ENCODE measurements at regions of chr22 and their contacts with region 1.

Region 1: DNA sequence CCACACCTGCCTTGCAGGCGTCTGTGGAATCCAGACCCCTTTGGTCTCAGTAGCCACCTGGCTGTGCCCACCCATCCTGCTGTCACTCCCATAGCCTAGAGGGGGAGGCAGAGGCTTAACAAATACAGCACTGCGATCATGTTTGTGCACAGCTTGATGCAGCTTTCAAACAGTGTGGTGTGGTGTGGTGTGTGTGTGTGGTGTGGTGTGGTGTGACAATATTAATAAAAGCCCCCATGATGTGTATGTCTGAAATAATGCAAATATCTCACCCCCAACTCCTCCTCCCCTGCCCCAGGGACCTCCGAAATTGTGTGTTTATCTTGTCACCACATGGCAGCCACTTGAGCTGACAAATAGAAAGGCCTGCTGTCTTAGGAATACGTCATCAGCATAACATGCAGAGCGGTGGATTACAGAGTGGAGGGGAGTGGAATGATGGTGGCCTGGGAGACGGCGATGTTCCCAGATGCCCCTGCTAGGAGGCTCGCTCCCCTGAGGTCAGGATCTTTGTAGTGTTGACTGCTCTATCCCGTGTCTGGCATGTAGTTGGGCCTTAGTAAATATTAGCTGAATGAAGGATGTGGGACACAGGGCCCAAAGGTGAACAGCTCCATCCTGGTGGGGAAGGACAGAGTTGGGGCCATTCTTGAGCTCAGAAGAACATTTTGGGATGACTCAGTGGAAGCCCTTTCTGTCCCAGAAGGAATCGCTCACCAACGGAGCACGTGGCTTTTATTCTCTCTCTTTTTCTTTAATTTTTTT is 2.8 kb downstream of the PDXP start:
- DNase-seq: peak; percentile 70
- H3K4me3 ChIP-seq: no peak overlapping the region
- H3K27ac ChIP-seq: peak overlapping the region; percentile 53 to 72
- H3K4me1 ChIP-seq: peaks cover 39% of the 10 kb centered on the region
- H3K27me3 ChIP-seq: no peaks in the 10 kb centered on the region
- CTCF ChIP-seq: peak in 1 of 3 experiments; percentile 18
- POLR2A ChIP-seq: no peak

Region 2: DNA sequence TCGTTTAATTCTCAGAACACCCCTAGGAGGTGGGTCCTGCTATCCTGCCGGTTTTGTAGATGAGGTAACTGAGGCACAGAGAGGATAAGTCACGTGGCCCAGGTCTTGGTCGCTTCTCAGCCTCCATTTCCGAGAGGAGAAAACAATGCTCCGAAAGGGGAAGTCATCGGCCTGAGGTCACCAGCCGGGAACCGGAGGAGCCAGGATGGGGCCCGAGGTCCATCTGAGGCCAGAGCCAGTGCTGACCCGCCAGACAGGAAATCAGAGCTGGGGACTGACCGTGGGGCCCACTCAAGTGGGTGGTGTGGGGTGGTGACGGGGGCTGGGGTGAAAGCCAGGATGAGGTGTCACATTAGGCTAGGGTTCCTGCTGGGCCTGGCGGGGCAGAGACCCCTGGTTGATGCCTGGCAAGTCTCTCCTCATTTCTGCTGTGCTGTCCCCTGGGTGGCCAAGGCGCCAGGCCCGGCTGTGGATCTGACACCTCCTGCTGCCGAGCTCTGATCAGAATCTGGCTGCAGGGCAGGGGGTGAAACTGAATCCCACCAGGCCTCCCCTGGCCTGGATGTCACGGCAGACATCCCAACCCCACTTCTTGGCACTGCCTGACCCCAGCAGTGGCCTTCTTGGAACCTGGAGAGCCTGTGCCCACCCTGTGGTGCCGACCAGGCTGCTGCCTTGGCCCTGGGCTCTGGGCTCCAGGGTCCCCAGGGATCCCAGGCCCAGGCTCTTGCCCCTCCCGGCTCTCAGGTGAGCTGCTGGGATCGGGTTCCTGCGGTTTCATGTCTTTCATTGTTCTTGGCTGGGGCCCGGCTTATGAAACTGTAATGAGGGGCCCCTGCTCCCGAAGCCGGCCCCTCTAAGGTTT is 47.5 kb after region 1 on chr22:
- intact Hi-C with region 1: no loop called
- DNase-seq: no peak
- H3K4me3 ChIP-seq: no peak overlapping the region
- H3K27ac ChIP-seq: no peak overlapping the region
- H3K4me1 ChIP-seq: no peaks in the 10 kb centered on the region
- H3K27me3 ChIP-seq: no peaks in the 10 kb centered on the region
- CTCF ChIP-seq: no peak
- POLR2A ChIP-seq: no peak

Region 3: DNA sequence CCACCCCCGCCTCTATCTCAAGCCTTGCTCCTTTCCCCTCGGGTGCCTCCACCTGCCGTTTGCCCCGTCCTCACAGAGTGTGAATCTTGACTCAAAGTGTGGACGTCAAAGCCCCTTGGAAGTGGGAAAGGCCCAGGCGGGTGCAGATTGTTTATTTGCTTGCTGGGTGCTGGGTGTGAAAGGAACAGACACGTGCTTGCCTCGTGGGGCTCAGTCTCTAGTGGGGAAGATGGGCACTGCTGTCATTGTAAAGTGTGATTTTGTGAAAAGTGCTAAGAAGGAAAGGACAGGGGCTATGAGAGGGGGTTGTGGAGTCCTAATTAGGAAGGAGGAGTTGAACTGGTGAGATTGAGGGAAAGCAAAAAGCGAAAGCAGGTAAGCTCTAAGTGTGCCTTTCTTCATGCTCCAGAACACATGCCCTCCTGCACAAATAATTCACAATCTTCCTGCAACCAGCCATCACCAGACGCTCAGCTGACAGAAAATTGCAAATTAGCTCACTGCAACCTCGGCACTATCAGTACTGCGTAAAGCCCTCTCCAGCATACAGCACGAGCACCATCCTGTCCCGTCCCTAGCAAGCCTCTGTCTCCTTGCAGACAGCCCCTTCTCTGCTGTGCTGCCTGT is 136.6 kb after region 1 on chr22:
- intact Hi-C with region 1: loop called (anchors 10 kb)
- DNase-seq: no peak
- H3K4me3 ChIP-seq: no peak overlapping the region
- H3K27ac ChIP-seq: no peak overlapping the region
- H3K4me1 ChIP-seq: peaks cover 8% of the 10 kb centered on the region
- H3K27me3 ChIP-seq: no peaks in the 10 kb centered on the region
- CTCF ChIP-seq: no peak
- POLR2A ChIP-seq: no peak

Region 4: GRCh38 chr22:38012604-38013072 is 351.3 kb after region 1 on chr22:
- intact Hi-C with region 1: no loop called
- DNase-seq: no peak
- H3K4me3 ChIP-seq: no peak overlapping the region
- H3K27ac ChIP-seq: peak overlapping the region in 1 of 2 donors; percentile 23
- H3K4me1 ChIP-seq: peaks cover 24% of the 10 kb centered on the region
- H3K27me3 ChIP-seq: no peaks in the 10 kb centered on the region
- CTCF ChIP-seq: no peak
- POLR2A ChIP-seq: no peak

Measured in testis (tissue), 5 donors.